Aorta (tissue), 5 donors: ENCODE measurements at regions of chr4 and their contacts with region 1.

Region 1: DNA sequence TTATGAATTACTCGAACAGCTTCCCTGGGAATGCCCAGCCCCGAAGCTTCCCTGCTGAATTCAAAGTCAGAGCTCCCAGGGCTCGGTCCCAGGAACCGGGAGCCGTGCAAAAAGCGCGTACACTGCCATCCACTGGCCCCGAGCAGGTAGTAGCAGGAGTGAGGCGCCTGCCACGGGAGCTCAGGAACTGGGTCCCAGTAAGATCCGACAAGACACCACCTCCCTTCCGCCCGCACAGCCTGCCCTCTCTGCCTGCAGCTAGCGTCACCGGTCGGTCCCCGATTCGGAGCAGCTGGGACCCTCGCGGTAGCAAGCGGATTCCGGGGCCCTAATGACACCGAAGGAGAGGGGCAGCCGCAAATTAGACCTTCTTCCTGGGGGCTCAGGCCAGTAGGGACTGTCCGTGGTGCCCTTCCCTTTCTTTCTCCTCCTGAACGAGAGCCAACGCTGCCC is 1.2 kb downstream of the CORIN start:
- DNase-seq: peak; percentile 79 to 86
- ATAC-seq: peak; percentile 89
- H3K4me3 ChIP-seq: peak overlapping the region; percentile 27 to 42
- H3K27ac ChIP-seq: no peak overlapping the region
- H3K4me1 ChIP-seq: peaks cover 0 to 3% of the 10 kb centered on the region in 2 donors
- H3K27me3 ChIP-seq: no peaks in the 10 kb centered on the region

Region 2: DNA sequence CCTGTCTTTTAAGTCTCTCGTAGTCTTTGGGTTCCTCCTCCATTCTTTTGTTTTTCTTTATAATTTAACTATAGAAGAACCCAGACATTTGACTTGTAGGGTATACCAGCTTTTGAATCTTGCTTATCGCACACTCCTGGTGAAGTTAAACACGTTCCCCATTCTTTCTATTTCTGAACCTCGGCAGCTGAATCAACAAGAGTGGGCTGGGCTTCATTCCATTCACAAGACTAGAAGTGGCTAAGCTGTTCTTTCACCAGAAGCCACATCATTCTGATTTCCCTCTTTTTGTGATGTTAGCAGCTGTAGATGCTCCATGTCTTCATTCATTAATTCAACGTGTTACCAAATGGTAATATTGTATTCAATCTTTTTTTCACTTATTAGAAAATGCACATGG is 166.7 kb before region 1 on chr4:
- intact Hi-C with region 1: loop called in 1 of 2 experiments (anchors 10 kb)
- DNase-seq: no peak
- ATAC-seq: no peak
- H3K4me3 ChIP-seq: no peak overlapping the region
- H3K27ac ChIP-seq: no peak overlapping the region
- H3K4me1 ChIP-seq: no peaks in the 10 kb centered on the region
- H3K27me3 ChIP-seq: no peaks in the 10 kb centered on the region

Region 3: DNA sequence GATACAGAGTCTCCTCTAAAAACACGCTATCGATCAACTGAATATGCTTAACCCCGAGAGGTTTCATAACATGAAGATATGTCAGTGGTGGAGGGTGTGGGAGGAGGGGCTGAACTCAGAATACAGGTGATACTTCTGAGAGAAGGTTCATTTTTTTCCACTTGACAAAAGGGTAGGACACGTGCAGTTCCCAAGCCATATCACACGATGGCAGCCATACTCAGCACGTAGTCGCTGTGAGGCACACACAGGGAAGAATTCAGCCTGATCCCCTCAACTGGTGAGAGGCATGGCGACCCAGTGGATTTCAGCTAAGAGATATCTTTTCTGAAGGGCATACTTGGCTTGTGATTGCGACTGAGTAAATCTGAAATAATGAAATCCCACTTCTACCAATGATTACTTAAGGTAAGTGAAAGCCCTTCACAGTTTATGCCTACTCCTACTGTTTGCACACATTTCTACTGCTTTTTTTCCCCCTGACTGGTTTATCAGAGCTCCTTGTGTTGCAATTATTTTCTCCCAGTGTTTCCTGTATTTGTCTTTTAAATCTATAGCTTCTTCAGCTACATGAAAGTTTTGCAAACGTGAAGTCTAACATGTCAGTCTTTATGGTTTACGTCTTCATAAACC is 131.9 kb before region 1 on chr4:
- intact Hi-C with region 1: loop called in 1 of 2 experiments (anchors 5 kb)
- DNase-seq: no peak
- ATAC-seq: peak; percentile 59
- H3K4me3 ChIP-seq: no peak overlapping the region
- H3K27ac ChIP-seq: no peak overlapping the region
- H3K4me1 ChIP-seq: no peaks in the 10 kb centered on the region
- H3K27me3 ChIP-seq: no peaks in the 10 kb centered on the region

Region 4: DNA sequence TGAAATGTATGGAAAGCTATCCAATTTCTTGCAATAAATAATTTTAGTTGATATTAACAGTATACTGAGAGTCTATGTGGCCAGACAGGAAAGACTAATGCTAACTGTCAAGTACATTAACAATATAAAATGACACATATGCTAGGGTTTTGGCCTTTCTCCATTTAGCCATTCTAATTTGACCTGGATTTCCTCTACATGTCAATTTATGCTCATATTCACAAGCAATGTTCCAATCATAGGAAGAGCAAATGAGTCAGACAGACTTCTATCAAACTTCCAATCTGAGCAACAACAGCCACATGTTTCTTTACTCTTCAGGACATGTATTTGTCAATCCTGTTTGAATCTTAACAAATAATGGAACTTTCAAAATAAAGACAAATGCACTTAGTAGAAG is 52.4 kb before region 1 on chr4:
- intact Hi-C with region 1: no loop called
- DNase-seq: no peak
- ATAC-seq: no peak
- H3K4me3 ChIP-seq: no peak overlapping the region
- H3K27ac ChIP-seq: no peak overlapping the region
- H3K4me1 ChIP-seq: no peaks in the 10 kb centered on the region
- H3K27me3 ChIP-seq: no peaks in the 10 kb centered on the region

Region 5: DNA sequence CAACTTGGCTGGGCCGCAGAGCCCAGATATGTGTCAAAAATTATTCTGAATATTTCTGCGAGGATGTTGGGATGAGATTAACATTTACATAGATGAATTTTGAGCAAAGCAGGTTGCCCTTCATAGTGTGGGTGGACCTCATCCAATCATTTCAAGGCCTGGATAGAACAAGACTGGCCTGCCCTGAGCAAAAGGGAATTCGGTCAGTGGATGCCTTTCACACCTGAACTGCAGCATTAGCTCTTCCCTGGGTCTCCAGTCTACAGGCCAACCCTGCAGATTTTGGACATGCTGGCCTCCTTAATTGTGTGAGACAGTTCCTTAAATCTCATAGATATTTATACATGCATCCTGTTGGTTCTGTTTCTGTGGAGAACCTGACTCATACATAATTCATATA is 614.1 kb after region 1 on chr4:
- intact Hi-C with region 1: no loop called
- DNase-seq: no peak
- ATAC-seq: no peak
- H3K4me3 ChIP-seq: no peak overlapping the region
- H3K27ac ChIP-seq: no peak overlapping the region
- H3K4me1 ChIP-seq: no peaks in the 10 kb centered on the region
- H3K27me3 ChIP-seq: no peaks in the 10 kb centered on the region